ENCODE measurements at regions of chrX and their contacts with region 1.

Region 1: GRCh38 chrX:154397819-154398724 is at the start of gene RPL10:
- DNase-seq: peak; percentile 86 to 94 (median 92)
- H3K4me3 ChIP-seq: peak within 1 kb of the TSS; percentile 55 to 95
- H3K4me3 Mint-ChIP-seq: peak within 1 kb of the TSS; percentile 96 to 99 (median 99)
- H3K27ac ChIP-seq: peak within 1 kb of the TSS; percentile 96
- H3K27ac Mint-ChIP-seq: peak within 1 kb of the TSS; percentile 99 to 100 (median 99)
- H3K4me1 ChIP-seq: peaks cover 15% of the 10 kb centered on the region
- H3K4me1 Mint-ChIP-seq: peaks cover 7 to 32% (median 16%) of the 10 kb centered on the region in 4 donors
- H3K27me3 ChIP-seq: no peaks in the 10 kb centered on the region
- H3K27me3 Mint-ChIP-seq: no peaks in the 10 kb centered on the region
- total RNA-seq, gene RPL10: 5,157 to 5,386 TPM

Region 2: GRCh38 chrX:153959649-153960048 is 438.4 kb before region 1 on chrX:
- CTCF ChIA-PET with region 1: no interaction called
- POLR2A ChIA-PET with region 1: no interaction called
- intact Hi-C with region 1: no loop called
- DNase-seq: peak in 1 of 5 donors; percentile 25
- H3K4me3 ChIP-seq: no peak overlapping the region
- H3K4me3 Mint-ChIP-seq: no peak overlapping the region
- H3K27ac ChIP-seq: no peak overlapping the region
- H3K27ac Mint-ChIP-seq: no peak overlapping the region
- H3K4me1 ChIP-seq: peaks cover 3% of the 10 kb centered on the region
- H3K4me1 Mint-ChIP-seq: no peaks in the 10 kb centered on the region
- H3K27me3 ChIP-seq: no peaks in the 10 kb centered on the region
- H3K27me3 Mint-ChIP-seq: no peaks in the 10 kb centered on the region

Region 3: DNA sequence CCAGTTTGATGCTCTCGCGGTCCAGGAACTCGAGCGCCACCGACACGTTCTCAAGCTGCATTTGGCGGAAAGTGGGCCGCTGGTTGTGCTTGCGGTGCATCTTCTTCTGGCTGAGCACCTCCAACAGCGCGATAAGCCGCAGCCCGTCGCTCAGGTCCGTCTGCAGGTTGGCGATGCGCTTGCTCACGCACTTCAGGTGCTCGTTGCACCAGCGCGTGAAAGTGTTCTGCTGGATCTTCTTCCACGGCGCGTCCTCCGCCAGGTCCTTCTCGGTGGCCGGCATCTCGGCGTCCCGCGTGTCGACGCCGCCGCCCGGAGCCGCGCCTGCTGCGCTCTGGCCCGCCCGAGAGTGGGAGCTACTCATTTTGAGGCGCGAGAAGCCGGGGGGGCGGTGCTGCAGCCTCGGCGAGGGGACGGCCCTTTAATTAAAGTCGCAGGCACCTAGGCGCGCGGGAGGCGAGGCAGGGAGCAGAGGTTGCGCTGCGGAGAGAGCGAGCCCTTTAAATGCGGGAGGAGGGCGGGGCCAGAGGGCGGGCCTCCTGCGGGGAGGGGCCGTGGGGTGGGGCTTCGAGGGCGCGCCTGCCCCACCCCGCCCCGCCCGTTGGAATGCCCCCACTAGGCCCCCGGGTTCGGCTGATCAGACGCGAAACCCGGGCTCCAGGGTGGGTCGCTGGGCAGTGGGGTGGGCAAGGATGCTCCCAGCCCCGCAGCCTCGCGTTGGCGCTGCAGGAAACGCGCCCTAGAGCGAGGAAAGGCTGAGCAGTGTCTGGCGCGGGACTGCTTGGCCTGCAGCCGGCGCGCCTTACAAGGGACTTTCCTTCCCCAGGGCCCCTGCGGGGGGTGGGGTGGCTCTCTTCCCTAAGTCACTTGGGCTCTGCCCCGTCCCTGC is 26.9 kb before region 1 on chrX:
- CTCF ChIA-PET with region 1: interaction called, 5 read pairs
- POLR2A ChIA-PET with region 1: interaction called, 69 read pairs
- intact Hi-C with region 1: no loop called
- DNase-seq: peak; percentile 89 to 92 (median 92)
- H3K4me3 ChIP-seq: peak overlapping the region in 1 of 2 donors; percentile 59
- H3K4me3 Mint-ChIP-seq: peak overlapping the region; percentile 78 to 93 (median 86)
- H3K27ac ChIP-seq: peak overlapping the region; percentile 92
- H3K27ac Mint-ChIP-seq: peak overlapping the region; percentile 78 to 94 (median 87)
- H3K4me1 ChIP-seq: peaks cover 51% of the 10 kb centered on the region
- H3K4me1 Mint-ChIP-seq: peaks cover 3 to 42% (median 25%) of the 10 kb centered on the region in 4 donors
- H3K27me3 ChIP-seq: no peaks in the 10 kb centered on the region
- H3K27me3 Mint-ChIP-seq: no peaks in the 10 kb centered on the region

Region 4: DNA sequence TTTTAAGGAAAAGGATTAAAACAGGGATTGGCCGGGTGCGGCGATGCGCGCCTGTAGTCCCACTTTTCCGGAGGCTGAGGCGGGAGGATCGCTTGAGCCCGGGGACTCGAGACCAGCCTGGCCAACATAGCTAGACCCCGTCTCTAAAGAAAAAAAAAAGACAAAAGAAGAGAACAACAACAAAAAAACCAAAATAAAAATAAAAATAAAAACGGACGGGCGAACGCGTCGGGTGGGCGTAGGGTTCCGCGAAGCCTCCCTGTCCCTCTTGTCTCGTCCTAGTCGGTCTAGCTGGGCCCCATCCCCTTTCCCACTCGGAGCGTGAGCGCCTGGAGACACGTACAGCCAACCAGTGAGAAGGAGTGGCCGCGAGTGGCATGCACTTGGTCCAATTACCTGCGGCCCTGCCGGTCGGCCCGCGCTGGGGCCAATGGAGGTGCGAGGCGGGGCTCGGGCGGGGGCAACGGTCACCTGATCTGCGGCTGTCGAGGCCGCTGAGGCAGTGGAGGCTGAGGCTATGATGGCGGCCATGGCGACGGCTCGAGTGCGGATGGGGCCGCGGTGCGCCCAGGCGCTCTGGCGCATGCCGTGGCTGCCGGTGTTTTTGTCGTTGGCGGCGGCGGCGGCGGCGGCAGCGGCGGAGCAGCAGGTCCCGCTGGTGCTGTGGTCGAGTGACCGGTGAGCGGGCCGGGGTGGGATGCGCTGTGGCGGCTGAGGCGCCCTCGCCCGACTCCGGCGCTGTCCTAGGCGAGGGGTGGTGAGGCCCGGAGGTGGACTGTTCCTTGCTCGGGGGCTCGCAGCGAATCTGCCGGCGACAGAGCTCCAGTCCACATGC is 30.3 kb after region 1 on chrX and contains the start of gene ATP6AP1:
- CTCF ChIA-PET with region 1: interaction called, 8 read pairs
- POLR2A ChIA-PET with region 1: interaction called, 37 read pairs
- intact Hi-C with region 1: no loop called
- DNase-seq: peak; percentile 84 to 89 (median 89)
- H3K4me3 ChIP-seq: peak within 1 kb of the TSS; percentile 61 to 62
- H3K4me3 Mint-ChIP-seq: peak within 1 kb of the TSS; percentile 74 to 89 (median 84)
- H3K27ac ChIP-seq: peak within 1 kb of the TSS; percentile 65
- H3K27ac Mint-ChIP-seq: peak within 1 kb of the TSS; percentile 72 to 93 (median 86)
- H3K4me1 ChIP-seq: peaks cover 28% of the 10 kb centered on the region
- H3K4me1 Mint-ChIP-seq: peaks cover 13 to 30% (median 23%) of the 10 kb centered on the region in 4 donors
- H3K27me3 ChIP-seq: no peaks in the 10 kb centered on the region
- H3K27me3 Mint-ChIP-seq: no peaks in the 10 kb centered on the region
- total RNA-seq, gene ATP6AP1: 60.4 to 62.6 TPM

Region 5: DNA sequence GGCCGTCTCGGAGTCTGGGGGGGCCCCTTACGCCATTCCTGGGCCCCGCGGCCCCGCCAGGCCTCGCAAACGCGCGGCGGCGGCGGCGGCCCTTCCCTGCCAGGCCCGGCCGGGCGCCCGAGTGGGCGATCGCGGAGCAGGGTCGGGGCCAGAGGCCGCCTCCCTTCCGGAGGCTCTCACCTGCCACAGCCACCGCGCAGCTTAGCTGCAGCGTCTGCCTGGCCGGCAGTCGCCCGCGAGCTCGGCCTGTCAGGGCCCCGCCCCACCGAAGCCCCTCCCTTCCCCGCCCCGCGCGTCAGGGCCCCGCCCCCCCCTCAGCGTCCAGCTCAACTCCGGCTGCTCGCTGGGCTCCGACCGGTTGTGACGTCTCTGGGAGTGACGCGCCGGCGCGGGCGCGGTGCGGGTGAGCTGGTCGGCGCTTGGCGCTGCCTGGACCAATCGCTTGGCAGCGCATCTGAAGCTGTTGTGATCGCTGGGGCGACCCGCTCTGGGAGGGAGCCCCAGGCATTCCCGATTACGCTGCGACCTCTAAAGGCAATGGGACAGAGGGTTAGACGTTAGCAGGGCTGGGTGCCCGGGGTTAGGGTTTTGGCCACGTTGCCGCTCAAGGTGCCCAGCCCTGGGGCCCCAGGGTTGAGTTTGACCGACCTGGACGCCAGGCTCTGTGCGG is 92.5 kb after region 1 on chrX and contains the start of gene SLC10A3:
- CTCF ChIA-PET with region 1: interaction called, 4 read pairs
- POLR2A ChIA-PET with region 1: interaction called, 111 read pairs
- intact Hi-C with region 1: no loop called
- DNase-seq: peak; percentile 83 to 92 (median 86)
- H3K4me3 ChIP-seq: peak within 1 kb of the TSS; percentile 42 to 57
- H3K4me3 Mint-ChIP-seq: peak within 1 kb of the TSS; percentile 87 to 93 (median 89)
- H3K27ac ChIP-seq: peak within 1 kb of the TSS; percentile 71
- H3K27ac Mint-ChIP-seq: peak within 1 kb of the TSS; percentile 90 to 97 (median 93)
- H3K4me1 ChIP-seq: peaks cover 28% of the 10 kb centered on the region
- H3K4me1 Mint-ChIP-seq: peaks cover 5 to 31% (median 16%) of the 10 kb centered on the region in 4 donors
- H3K27me3 ChIP-seq: no peaks in the 10 kb centered on the region
- H3K27me3 Mint-ChIP-seq: no peaks in the 10 kb centered on the region
- total RNA-seq, gene SLC10A3: 22.5 to 23.7 TPM

Region 6: GRCh38 chrX:154526901-154527675 is 129.0 kb after region 1 on chrX:
- CTCF ChIA-PET with region 1: interaction called, 26 read pairs
- POLR2A ChIA-PET with region 1: interaction called, 56 read pairs
- intact Hi-C with region 1: no loop called
- DNase-seq: peak; percentile 43 to 65 (median 47)
- H3K4me3 ChIP-seq: no peak overlapping the region
- H3K4me3 Mint-ChIP-seq: peak overlapping the region in 5 of 8 donors; percentile 12 to 63 (median 52)
- H3K27ac ChIP-seq: peak overlapping the region; percentile 31
- H3K27ac Mint-ChIP-seq: peak overlapping the region in 6 of 7 donors; percentile 22 to 77 (median 68)
- H3K4me1 ChIP-seq: peaks cover 23% of the 10 kb centered on the region
- H3K4me1 Mint-ChIP-seq: peaks cover 11 to 23% (median 16%) of the 10 kb centered on the region in 4 donors
- H3K27me3 ChIP-seq: no peaks in the 10 kb centered on the region
- H3K27me3 Mint-ChIP-seq: no peaks in the 10 kb centered on the region

Region 7: DNA sequence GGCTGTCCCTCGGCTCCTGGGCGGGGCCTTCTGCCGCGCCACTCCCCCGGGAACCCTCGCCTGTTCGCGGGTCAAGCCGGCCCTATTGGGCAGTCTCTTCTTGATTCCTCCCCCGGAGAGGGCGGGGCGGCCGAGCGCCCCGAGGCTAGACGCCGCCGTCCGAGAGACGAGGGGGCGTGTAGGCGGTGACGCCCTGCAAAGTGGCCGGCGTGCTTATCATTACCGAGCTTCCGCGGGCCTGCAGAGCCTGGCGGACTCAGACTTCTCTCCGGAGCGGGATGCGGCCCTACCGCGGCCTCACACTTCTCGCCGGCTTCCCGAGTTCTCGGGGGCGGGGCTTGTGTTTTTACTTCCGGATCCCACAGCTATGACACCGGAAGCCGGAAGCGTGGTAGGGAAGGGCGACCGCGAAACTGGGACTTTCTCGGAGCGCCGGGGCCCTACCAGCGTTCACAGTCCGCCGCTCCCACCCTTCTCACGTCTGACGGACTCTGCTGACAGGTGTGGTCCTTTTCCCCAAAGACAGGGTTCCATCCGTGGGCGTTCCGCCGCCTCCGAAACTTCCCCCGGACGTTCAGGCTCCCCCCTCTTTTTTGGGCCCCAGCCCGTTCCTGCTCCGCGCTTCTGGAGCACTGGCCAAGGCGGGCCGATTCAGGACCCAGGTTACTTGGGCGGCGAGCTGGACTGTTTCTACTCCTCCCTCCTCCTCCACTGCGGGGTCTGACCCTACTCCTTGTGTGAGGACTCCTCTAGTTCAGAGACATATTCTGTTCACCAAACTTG is 149.4 kb after region 1 on chrX and contains the start of gene IKBKG:
- CTCF ChIA-PET with region 1: interaction called, 3 read pairs
- POLR2A ChIA-PET with region 1: interaction called, 13 read pairs
- intact Hi-C with region 1: no loop called
- DNase-seq: peak; percentile 91 to 93 (median 92)
- H3K4me3 ChIP-seq: peak within 1 kb of the TSS; percentile 80 to 83
- H3K4me3 Mint-ChIP-seq: peak within 1 kb of the TSS; percentile 86 to 94 (median 91)
- H3K27ac ChIP-seq: peak within 1 kb of the TSS; percentile 97
- H3K27ac Mint-ChIP-seq: peak within 1 kb of the TSS; percentile 83 to 96 (median 94)
- H3K4me1 ChIP-seq: peaks cover 46% of the 10 kb centered on the region
- H3K4me1 Mint-ChIP-seq: peaks cover 21 to 59% (median 35%) of the 10 kb centered on the region in 4 donors
- H3K27me3 ChIP-seq: no peaks in the 10 kb centered on the region
- H3K27me3 Mint-ChIP-seq: no peaks in the 10 kb centered on the region
- total RNA-seq, gene IKBKG: 44.4 to 44.7 TPM

Measured in CD4-positive, alpha-beta memory T cell (primary cell).